ENCODE measurements at regions of chr11 and their contacts with region 1.

Region 1: GRCh38 chr11:47355283-47356128 is 3.0 kb upstream of the MYBPC3 start:
- DNase-seq: peak; percentile 97
- ATAC-seq: peak; percentile 89
- H3K4me3 ChIP-seq: peak overlapping the region; percentile 46
- H3K27ac ChIP-seq: no peak overlapping the region
- H3K4me1 ChIP-seq: no peaks in the 10 kb centered on the region
- H3K27me3 ChIP-seq: no peaks in the 10 kb centered on the region
- CTCF ChIP-seq: peak; percentile 81

Region 2: DNA sequence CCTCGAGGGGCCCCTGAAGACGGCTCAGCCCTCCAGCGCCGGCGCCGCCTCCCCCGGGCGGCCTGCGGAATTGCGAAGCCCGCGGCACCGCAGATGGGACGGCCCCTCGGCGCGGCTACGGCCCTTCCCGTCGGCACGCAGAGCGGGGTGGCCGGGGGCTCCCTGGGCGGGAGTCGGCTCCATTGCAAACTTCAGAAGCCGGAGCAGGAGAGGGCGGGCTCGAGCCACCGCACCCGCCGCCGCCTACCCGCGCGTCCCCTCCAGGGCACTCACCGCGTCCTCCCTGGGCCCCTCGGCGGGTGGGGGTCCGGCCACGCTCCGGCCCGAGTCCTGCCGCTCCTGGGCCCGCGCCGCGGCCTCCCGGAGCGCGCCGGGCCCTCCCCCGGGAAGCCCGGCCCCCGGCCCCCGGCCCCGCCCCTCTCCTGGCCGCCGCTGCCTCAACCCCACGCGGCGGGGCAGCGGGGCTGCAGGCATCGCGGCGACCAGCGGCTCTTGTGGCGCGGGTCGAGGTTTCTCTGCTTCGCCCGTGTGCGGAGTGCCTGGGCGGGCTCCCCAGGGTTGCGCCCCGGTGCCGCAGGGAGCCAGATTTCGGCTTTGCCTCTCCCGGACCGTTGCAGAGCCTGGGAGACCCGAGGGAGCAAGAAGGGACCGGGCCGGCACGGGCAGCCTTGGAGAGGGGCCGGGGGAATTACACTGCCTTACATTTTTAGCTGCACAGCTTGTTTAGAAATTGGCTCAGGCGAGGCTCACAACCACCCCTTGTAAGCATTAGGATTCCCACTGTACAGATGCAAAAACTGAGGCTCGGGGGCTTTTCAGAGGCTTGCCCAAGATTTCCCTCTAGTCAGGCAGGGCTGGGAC is 169.2 kb before region 1 on chr11 and contains the start of gene PACSIN3:
- intact Hi-C with region 1: loop called (anchors 10 kb)
- DNase-seq: peak; percentile 83
- ATAC-seq: peak; percentile 76
- H3K4me3 ChIP-seq: peak within 1 kb of the TSS; percentile 77
- H3K27ac ChIP-seq: peak within 1 kb of the TSS; percentile 82
- H3K4me1 ChIP-seq: peaks cover 37% of the 10 kb centered on the region
- H3K27me3 ChIP-seq: no peaks in the 10 kb centered on the region
- CTCF ChIP-seq: no peak
- total RNA-seq, gene PACSIN3: 36.9 TPM

Region 3: GRCh38 chr11:47269829-47270305 is 85.6 kb before region 1 on chr11 and contains the start of gene MADD:
- intact Hi-C with region 1: loop called (anchors 10 kb)
- DNase-seq: peak; percentile 95
- ATAC-seq: peak; percentile 94
- H3K4me3 ChIP-seq: peak within 1 kb of the TSS; percentile 80
- H3K27ac ChIP-seq: peak within 1 kb of the TSS; percentile 94
- H3K4me1 ChIP-seq: peaks cover 39% of the 10 kb centered on the region
- H3K27me3 ChIP-seq: no peaks in the 10 kb centered on the region
- CTCF ChIP-seq: no peak
- total RNA-seq, gene MADD: 50.1 TPM

Measured in upper lobe of right lung (tissue), 1 donor.